Activated CD4-positive, alpha-beta memory T cell treated with anti-CD3 and anti-CD28 coated beads for 36 hours (primary cell): ENCODE measurements at regions of chr5 and their contacts with region 1.

Region 1: GRCh38 chr5:56827049-56827448 is 11.7 kb downstream of the MAP3K1 start:
- DNase-seq: peak; percentile 25
- H3K4me3 Mint-ChIP-seq: peak overlapping the region; percentile 2
- H3K27ac Mint-ChIP-seq: peak overlapping the region; percentile 80
- H3K4me1 Mint-ChIP-seq: peaks cover 90% of the 10 kb centered on the region
- H3K27me3 Mint-ChIP-seq: no peaks in the 10 kb centered on the region

Region 2: DNA sequence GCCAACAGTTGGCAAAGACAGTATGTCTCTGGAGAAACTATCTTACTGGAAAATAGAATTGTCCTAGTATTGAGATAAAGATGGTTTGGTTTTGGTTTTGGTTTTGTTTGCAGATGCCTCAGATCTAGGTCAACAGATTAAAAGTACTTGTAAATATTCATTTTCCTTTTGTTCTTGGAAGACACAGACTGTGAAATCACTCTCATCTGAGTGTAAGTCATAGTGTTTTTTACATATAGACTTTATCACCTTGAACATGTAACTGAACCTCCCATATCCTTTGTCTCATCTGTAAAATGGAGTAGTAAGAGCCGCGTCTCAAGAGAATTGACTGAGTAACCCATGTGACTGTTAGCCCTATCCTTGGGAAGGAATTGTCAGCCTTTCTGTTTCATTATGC is 22.6 kb after region 1 on chr5:
- CTCF ChIA-PET with region 1: no interaction called
- POLR2A ChIA-PET with region 1: no interaction called
- intact Hi-C with region 1: loop called (anchors 2 kb)
- DNase-seq: no peak
- H3K4me3 Mint-ChIP-seq: peak overlapping the region; percentile 61
- H3K27ac Mint-ChIP-seq: peak overlapping the region; percentile 75
- H3K4me1 Mint-ChIP-seq: peaks cover 88% of the 10 kb centered on the region
- H3K27me3 Mint-ChIP-seq: no peaks in the 10 kb centered on the region

Region 3: GRCh38 chr5:57002959-57003485 is 176.0 kb after region 1 on chr5:
- CTCF ChIA-PET with region 1: no interaction called
- POLR2A ChIA-PET with region 1: no interaction called
- intact Hi-C with region 1: no loop called
- DNase-seq: no peak
- H3K4me3 Mint-ChIP-seq: no peak overlapping the region
- H3K27ac Mint-ChIP-seq: no peak overlapping the region
- H3K4me1 Mint-ChIP-seq: no peaks in the 10 kb centered on the region
- H3K27me3 Mint-ChIP-seq: peaks cover 4% of the 10 kb centered on the region